A549 (cell line): ENCODE measurements at regions of chr17 and their contacts with region 1.

Region 1: DNA sequence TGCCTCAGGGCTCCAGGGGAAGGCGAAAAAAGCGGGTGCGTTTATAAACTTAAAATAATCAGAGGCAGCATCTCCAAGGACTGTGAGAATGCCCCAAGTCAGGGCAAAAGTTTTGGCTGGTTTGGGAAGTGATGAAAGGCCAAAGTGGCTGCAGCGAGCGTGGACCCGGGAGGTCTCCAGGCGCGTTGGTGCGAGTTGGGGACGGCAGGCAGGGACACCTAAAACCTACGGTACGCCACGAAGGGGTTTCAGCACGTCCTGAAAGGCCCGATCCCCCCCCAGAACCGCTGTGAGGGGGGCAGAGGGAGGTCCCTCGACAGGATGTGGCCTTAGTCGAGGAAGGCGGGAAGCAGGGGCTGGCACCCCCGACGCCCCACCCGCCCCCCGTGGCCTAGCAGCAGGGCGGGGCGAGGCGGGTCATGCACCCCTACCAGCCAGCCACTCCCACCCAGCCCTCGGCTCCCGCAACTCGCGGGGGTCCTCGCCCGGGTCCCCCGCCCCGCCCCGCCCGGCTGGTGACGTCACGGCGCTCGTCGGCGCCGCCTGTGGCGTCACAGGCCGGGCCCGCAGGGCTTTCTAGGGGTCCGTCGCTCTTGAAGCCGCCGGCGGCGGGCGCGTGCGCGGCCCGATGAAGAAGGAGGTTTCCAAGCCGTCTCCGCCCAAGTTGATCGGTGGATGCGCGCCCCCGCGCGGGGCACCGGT is at the start of gene MYCBPAP:
- DNase-seq: peak; percentile 81 to 83
- ATAC-seq: peak; percentile 76 to 85
- H3K4me3 ChIP-seq: peak within 1 kb of the TSS; percentile 54
- H3K27ac ChIP-seq: peak within 1 kb of the TSS; percentile 77 to 89
- H3K4me1 ChIP-seq: peaks cover 16% of the 10 kb centered on the region; the same call in 2 of the 3 replicates
- CTCF ChIP-seq: peak; percentile 39
- EP300 ChIP-seq: no peak
- POLR2A ChIP-seq: no peak
- RAD21 ChIP-seq: no peak
- polyA plus RNA-seq, gene MYCBPAP: 2.5 and 4.1 TPM in 2 replicates

Region 2: DNA sequence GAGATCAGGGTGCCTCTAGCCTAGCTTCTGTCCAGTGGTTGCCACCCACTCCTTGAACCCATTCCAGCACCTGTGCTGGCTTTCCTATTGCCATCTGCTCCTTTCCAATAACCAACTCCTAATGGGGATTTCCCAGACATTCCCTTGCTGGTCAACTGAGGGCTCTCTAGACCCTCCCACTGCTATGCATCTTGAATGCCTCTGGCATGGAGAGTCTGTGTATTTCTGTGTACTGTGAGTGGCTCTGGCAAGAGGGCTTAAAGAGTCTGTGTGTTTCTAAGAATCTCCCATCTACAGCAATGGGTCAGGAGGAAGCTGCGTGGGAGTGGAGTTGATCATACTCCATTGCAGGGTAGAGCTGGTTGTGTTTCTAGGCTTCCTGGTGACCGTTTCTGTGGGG is 13.5 kb after region 1 on chr17:
- CTCF ChIA-PET with region 1: interaction called, 28 read pairs
- POLR2A ChIA-PET with region 1: interaction called, 3 read pairs
- DNase-seq: no peak
- ATAC-seq: no peak
- H3K4me3 ChIP-seq: no peak overlapping the region
- H3K27ac ChIP-seq: no peak overlapping the region
- H3K4me1 ChIP-seq: no peaks in the 10 kb centered on the region
- CTCF ChIP-seq: no peak
- EP300 ChIP-seq: no peak
- POLR2A ChIP-seq: no peak
- RAD21 ChIP-seq: no peak